Heart right ventricle (tissue), 16 donors: ENCODE measurements at regions of chr6 and their contacts with region 1.

Region 1: DNA sequence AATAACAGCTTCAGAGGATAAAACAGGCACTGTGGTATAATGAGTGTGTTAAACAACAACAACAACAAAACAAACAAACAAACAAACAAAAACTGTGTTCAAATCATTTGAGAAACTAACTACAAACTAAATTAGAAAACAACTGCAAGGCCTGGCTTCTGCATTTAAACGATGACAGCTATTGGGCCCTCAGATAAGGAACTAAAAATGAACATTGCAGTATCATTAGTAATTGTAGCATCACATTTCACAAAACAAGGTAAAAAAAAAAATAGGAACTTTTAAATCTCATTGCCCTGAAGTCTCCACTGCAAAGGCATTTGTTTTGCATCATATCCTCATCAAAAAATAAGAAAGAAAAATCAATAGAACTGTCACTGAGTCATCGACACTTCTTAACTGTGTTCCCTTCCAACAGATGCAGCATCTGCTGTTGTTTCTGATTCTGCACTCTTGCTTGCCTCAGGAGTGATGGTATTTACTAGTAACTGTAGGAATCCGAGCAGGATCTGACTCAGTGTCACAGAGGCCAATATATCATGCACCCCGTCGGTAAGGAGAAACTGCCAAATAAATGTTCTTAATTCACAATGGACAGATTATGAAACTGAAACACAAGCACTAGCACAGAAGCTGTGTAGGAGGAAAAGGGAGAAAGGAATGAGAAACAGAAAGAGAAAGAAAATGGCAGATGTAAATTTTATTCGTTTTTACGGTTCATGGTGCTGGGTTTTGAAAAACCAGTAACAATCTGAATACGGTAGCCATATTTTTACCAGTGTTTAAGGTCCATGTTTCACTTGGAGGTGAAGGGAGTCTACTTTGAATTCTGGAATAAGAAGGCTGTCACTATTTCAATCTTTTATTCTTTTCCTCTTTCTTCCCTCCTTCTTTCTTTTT is 365.7 kb upstream of the EPHA7 start:
- DNase-seq: no peak
- ATAC-seq: peak; percentile 34 to 93 (median 71)
- H3K4me3 ChIP-seq: peak overlapping the region in 6 of 10 donors; percentile 10 to 31 (median 24)
- H3K27ac ChIP-seq: peak overlapping the region in 8 of 10 donors; percentile 6 to 76 (median 48)
- H3K4me1 ChIP-seq: peaks cover 0 to 13% (median 8%) of the 10 kb centered on the region in 9 donors
- H3K27me3 ChIP-seq: no peaks in the 10 kb centered on the region
- CTCF ChIP-seq: no peak

Region 2: GRCh38 chr6:93806409-93807270 is 21.6 kb after region 1 on chr6:
- intact Hi-C with region 1: no loop called
- DNase-seq: no peak
- ATAC-seq: no peak
- H3K4me3 ChIP-seq: no peak overlapping the region
- H3K27ac ChIP-seq: no peak overlapping the region
- H3K4me1 ChIP-seq: no peaks in the 10 kb centered on the region
- H3K27me3 ChIP-seq: no peaks in the 10 kb centered on the region
- CTCF ChIP-seq: no peak

Region 3: DNA sequence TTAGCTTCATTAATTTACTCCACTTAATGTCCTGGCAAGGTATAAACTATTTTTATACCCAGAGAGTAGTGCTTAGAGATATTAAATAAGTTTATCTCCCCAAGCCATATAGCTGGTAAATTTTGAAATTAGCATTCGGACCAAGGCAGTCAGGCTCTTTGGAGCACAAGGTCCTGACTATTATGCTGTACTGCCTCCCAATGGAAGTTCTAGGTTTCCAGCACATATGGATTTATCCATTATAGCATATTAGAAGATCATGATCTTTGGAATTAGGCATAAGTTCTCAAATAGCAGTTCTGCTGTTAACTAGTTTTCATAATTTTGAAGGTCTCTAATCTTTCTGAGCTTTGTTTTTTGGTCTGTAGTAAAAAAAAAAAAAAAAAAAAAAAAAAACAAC is 469.6 kb after region 1 on chr6:
- intact Hi-C with region 1: loop called in 1 of 10 experiments (anchors 5 kb)
- DNase-seq: no peak
- ATAC-seq: no peak
- H3K4me3 ChIP-seq: no peak overlapping the region
- H3K27ac ChIP-seq: no peak overlapping the region
- H3K4me1 ChIP-seq: no peaks in the 10 kb centered on the region
- H3K27me3 ChIP-seq: no peaks in the 10 kb centered on the region
- CTCF ChIP-seq: peak in 4 of 9 donors; percentile 18 to 35 (median 28)